ENCODE measurements at regions of chr3 and their contacts with region 1.

Region 1: DNA sequence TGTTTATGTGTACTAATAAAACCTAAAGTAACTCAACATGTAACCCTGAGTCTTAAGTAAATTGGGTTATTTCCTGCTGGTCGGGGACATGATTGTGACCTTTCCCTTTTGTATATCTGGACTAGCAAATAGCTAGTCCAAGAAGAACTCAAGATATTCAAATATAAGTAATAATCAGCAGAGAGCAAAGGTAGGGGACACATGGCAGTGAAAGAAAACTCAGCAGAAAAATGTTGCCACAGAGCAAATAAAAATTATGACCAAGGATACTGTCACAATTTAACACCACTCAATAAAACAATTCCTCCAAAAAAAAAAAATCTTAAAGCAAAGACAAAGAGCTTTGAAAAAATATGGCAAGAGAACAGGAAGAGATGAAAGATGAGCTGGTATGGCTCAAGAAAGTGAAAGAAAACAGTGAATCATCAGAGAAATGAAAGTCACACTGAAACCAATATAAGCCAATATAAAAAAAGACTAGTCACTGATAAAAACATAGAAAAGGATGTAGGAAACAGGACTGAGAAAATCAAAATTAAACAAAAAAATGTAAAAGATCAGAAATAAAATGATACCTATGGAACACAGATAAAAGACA is 43.4 kb downstream of the HLTF start:
- DNase-seq: no peak
- H3K4me3 Mint-ChIP-seq: no peak overlapping the region
- H3K27ac Mint-ChIP-seq: no peak overlapping the region
- H3K4me1 Mint-ChIP-seq: peaks cover 15% of the 10 kb centered on the region
- H3K27me3 Mint-ChIP-seq: no peaks in the 10 kb centered on the region

Region 2: GRCh38 chr3:148737104-148737530 is 305.8 kb before region 1 on chr3:
- CTCF ChIA-PET with region 1: no interaction called
- intact Hi-C with region 1: no loop called
- DNase-seq: no peak
- H3K4me3 Mint-ChIP-seq: no peak overlapping the region
- H3K27ac Mint-ChIP-seq: no peak overlapping the region
- H3K4me1 Mint-ChIP-seq: no peaks in the 10 kb centered on the region
- H3K27me3 Mint-ChIP-seq: no peaks in the 10 kb centered on the region

Region 3: GRCh38 chr3:149086232-149086988 is 43.5 kb after region 1 on chr3 and contains the start of gene HLTF:
- CTCF ChIA-PET with region 1: interaction called, 3 read pairs
- intact Hi-C with region 1: loop called (anchors 2 kb)
- DNase-seq: peak; percentile 94
- H3K4me3 Mint-ChIP-seq: peak within 1 kb of the TSS; percentile 95
- H3K27ac Mint-ChIP-seq: peak within 1 kb of the TSS; percentile 67
- H3K4me1 Mint-ChIP-seq: peaks cover 14% of the 10 kb centered on the region
- H3K27me3 Mint-ChIP-seq: no peaks in the 10 kb centered on the region
- total RNA-seq, gene HLTF: 22.0 to 22.6 TPM

Region 4: DNA sequence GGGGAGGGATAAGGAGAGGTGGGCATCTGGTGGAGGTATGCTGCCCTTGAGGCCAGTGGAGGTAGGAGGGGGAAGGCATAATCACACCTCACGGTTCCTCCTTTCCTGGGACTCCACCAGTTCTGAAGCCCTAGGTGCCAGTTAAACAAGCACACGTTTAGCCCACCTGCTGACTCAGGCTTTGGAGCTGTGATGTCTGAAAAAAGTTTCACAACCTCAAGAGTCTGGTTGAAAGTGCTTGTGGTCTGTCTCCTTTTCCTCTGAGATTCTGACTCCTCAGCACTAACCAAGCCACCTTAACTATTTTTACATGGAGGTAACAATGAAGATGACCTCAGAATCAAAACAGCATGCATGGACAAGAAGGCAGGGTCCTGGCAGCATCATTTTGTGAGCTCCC is 109.5 kb after region 1 on chr3:
- CTCF ChIA-PET with region 1: no interaction called
- intact Hi-C with region 1: no loop called
- DNase-seq: peak; percentile 21
- H3K4me3 Mint-ChIP-seq: no peak overlapping the region
- H3K27ac Mint-ChIP-seq: no peak overlapping the region
- H3K4me1 Mint-ChIP-seq: peaks cover 5% of the 10 kb centered on the region
- H3K27me3 Mint-ChIP-seq: no peaks in the 10 kb centered on the region